GM10248 (cell line): ENCODE measurements at regions of chr14 and their contacts with region 1.

Region 1: DNA sequence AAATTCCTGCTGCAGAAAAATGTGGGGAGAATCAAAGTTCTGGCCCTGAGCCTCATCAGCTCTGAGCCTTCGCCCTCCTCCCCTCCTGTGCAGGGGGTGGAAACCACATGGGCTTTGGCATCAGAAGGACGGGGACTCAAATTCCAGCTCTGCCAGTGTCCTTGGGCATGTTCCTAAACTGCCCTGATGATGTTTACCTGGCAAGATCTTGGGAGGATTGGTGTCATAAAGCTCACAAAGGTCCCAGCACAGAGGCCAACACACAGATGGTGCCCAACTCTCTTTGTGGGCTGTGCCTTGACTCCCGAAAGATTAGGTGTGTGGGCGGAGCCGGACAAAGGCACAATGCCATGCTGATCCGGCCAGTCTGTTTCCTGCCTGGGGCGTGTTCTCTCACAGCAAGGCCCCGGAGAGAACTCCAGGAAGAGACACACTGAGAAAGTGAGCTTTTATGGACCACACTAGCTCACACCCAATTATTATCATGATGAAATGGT is 20.5 kb upstream of the CLMN start:
- DNase-seq: no peak
- CTCF ChIP-seq: no peak

Region 2: GRCh38 chr14:95233702-95234241 is 106.5 kb before region 1 on chr14:
- CTCF ChIA-PET with region 1: no interaction called
- POLR2A ChIA-PET with region 1: no interaction called
- DNase-seq: peak; percentile 88
- CTCF ChIP-seq: no peak

Region 3: GRCh38 chr14:95327558-95328374 is 12.5 kb before region 1 on chr14:
- CTCF ChIA-PET with region 1: interaction called, 13 read pairs
- POLR2A ChIA-PET with region 1: no interaction called
- DNase-seq: peak; percentile 82
- CTCF ChIP-seq: no peak